ENCODE measurements at regions of chr22 and their contacts with region 1.

Region 1: GRCh38 chr22:41468381-41469217 is at the starts of genes ACO2 and PHF5A:
- DNase-seq: peak; percentile 77 to 96 (median 85)
- ATAC-seq: peak; percentile 96
- H3K4me3 ChIP-seq: peak within 1 kb of the TSS; percentile 89
- H3K27ac ChIP-seq: peak within 1 kb of the TSS; percentile 97
- H3K4me1 ChIP-seq: peaks cover 0 to 9% of the 10 kb centered on the region in 2 experiments; a peak in 2 of 5 replicates
- H3K27me3 ChIP-seq: no peaks in the 10 kb centered on the region
- CTCF ChIP-seq: no peak
- EP300 ChIP-seq: peak; percentile 3; the same call in 1 of the 2 replicates
- POLR2A ChIP-seq: peak; percentile 83
- RAD21 ChIP-seq: no peak
- polyA plus RNA-seq, gene ACO2: 16.2 to 28.7 TPM
- polyA plus RNA-seq, gene PHF5A: 14.2 to 30.9 TPM

Region 2: GRCh38 chr22:41285820-41286638 is 182.6 kb before region 1 on chr22 and contains the start of gene RANGAP1:
- CTCF ChIA-PET with region 1: no interaction called
- POLR2A ChIA-PET with region 1: no interaction called
- in situ Hi-C with region 1: no loop called
- intact Hi-C with region 1: loop called (anchors 10 kb)
- DNase-seq: peak; percentile 88 to 97 (median 92)
- ATAC-seq: peak; percentile 99
- H3K4me3 ChIP-seq: peak within 1 kb of the TSS; percentile 96
- H3K27ac ChIP-seq: peak within 1 kb of the TSS; percentile 97
- H3K4me1 ChIP-seq: peaks cover 12 to 20% of the 10 kb centered on the region in 2 experiments
- H3K27me3 ChIP-seq: no peaks in the 10 kb centered on the region
- CTCF ChIP-seq: peak in 2 of 3 experiments; percentile 2 to 28; a peak in 2 of 6 replicates
- EP300 ChIP-seq: no peak
- POLR2A ChIP-seq: peak; percentile 84
- RAD21 ChIP-seq: no peak
- polyA plus RNA-seq, gene RANGAP1: 2.1 to 3.8 TPM

Region 3: GRCh38 chr22:41429232-41429950 is 39.2 kb before region 1 on chr22:
- CTCF ChIA-PET with region 1: no interaction called
- POLR2A ChIA-PET with region 1: no interaction called
- in situ Hi-C with region 1: no loop called
- intact Hi-C with region 1: no loop called
- DNase-seq: no peak
- ATAC-seq: no peak
- H3K4me3 ChIP-seq: no peak overlapping the region
- H3K27ac ChIP-seq: no peak overlapping the region
- H3K4me1 ChIP-seq: peaks cover 0 to 3% of the 10 kb centered on the region in 2 experiments; a peak in 1 of 5 replicates
- H3K27me3 ChIP-seq: no peaks in the 10 kb centered on the region
- CTCF ChIP-seq: no peak
- EP300 ChIP-seq: no peak
- POLR2A ChIP-seq: no peak
- RAD21 ChIP-seq: no peak

Region 4: GRCh38 chr22:41448189-41448808 is 20.3 kb before region 1 on chr22:
- CTCF ChIA-PET with region 1: no interaction called
- POLR2A ChIA-PET with region 1: interaction called, 36 read pairs
- in situ Hi-C with region 1: no loop called
- intact Hi-C with region 1: loop called (anchors 2 kb)
- DNase-seq: peak; percentile 62 to 94 (median 76)
- ATAC-seq: peak; percentile 82
- H3K4me3 ChIP-seq: peak overlapping the region; percentile 92
- H3K27ac ChIP-seq: peak overlapping the region; percentile 94
- H3K4me1 ChIP-seq: peaks cover 6 to 26% of the 10 kb centered on the region in 2 experiments; a peak in 4 of 5 replicates
- H3K27me3 ChIP-seq: no peaks in the 10 kb centered on the region
- CTCF ChIP-seq: no peak
- EP300 ChIP-seq: no peak
- POLR2A ChIP-seq: peak; percentile 63
- RAD21 ChIP-seq: no peak

Region 5: GRCh38 chr22:41458161-41458728 is 10.4 kb before region 1 on chr22:
- CTCF ChIA-PET with region 1: no interaction called
- POLR2A ChIA-PET with region 1: interaction called, 13 read pairs
- in situ Hi-C with region 1: no loop called
- intact Hi-C with region 1: no loop called
- DNase-seq: no peak
- ATAC-seq: no peak
- H3K4me3 ChIP-seq: no peak overlapping the region
- H3K27ac ChIP-seq: no peak overlapping the region
- H3K4me1 ChIP-seq: no peaks in the 10 kb centered on the region
- H3K27me3 ChIP-seq: no peaks in the 10 kb centered on the region
- CTCF ChIP-seq: no peak
- EP300 ChIP-seq: no peak
- POLR2A ChIP-seq: no peak
- RAD21 ChIP-seq: no peak

Region 6: GRCh38 chr22:41479671-41480396 is 11.2 kb after region 1 on chr22:
- CTCF ChIA-PET with region 1: no interaction called
- POLR2A ChIA-PET with region 1: interaction called, 18 read pairs
- in situ Hi-C with region 1: no loop called
- intact Hi-C with region 1: no loop called
- DNase-seq: no peak
- ATAC-seq: no peak
- H3K4me3 ChIP-seq: no peak overlapping the region
- H3K27ac ChIP-seq: no peak overlapping the region
- H3K4me1 ChIP-seq: peaks cover 6% of the 10 kb centered on the region in 2 experiments; a peak in 3 of 5 replicates
- H3K27me3 ChIP-seq: no peaks in the 10 kb centered on the region
- CTCF ChIP-seq: no peak
- EP300 ChIP-seq: no peak
- POLR2A ChIP-seq: no peak
- RAD21 ChIP-seq: no peak

Region 7: GRCh38 chr22:41517172-41518047 is 48.8 kb after region 1 on chr22:
- CTCF ChIA-PET with region 1: no interaction called
- POLR2A ChIA-PET with region 1: no interaction called
- in situ Hi-C with region 1: no loop called
- intact Hi-C with region 1: loop called (anchors 5 kb)
- DNase-seq: peak in 3 of 4 experiments; percentile 43 to 46 (median 43)
- ATAC-seq: no peak
- H3K4me3 ChIP-seq: no peak overlapping the region
- H3K27ac ChIP-seq: no peak overlapping the region
- H3K4me1 ChIP-seq: peaks cover 12 to 19% of the 10 kb centered on the region in 2 experiments
- H3K27me3 ChIP-seq: no peaks in the 10 kb centered on the region
- CTCF ChIP-seq: peak; percentile 72 to 80 (median 74)
- EP300 ChIP-seq: no peak
- POLR2A ChIP-seq: no peak; the same call in 1 of the 2 replicates
- RAD21 ChIP-seq: peak; percentile 45 to 68

Region 8: DNA sequence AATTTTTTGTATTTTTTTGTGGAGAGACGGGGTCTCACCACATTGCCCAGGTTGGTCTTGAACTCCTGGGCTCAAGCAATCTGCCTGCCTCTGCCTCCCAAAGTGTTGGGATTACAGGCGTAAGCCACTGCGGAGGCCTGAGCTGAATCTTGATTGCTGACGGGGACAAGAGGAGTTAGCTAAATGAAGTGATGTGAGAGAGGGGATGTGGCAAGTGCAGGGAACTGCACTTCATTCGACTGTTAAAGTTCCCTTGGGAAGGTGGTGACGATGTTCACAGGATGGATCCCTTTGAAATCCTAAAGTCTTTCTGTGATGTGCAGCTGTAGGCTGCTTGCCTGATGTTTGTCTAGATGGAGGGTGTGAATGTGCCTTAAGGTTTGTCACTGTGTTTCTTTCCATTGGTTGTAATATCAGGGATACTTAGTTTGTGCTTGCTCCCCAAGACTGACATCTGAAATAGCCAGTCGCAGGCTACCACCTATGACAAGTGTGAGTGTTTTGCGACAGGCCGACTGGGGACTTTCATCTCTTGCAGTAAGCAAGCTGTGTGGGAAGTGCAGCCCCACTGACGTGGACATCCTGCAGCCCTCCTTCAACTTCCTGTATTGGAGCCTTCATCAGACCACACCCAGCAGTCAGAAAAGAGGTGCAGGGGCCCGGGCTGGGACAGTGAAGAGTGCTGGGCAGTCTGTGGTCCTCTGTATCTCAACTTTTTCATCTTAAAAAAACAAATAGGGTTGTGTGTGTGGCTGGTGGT is 312.3 kb after region 1 on chr22:
- CTCF ChIA-PET with region 1: no interaction called
- POLR2A ChIA-PET with region 1: no interaction called
- in situ Hi-C with region 1: no loop called
- intact Hi-C with region 1: no loop called
- DNase-seq: peak; percentile 25 to 59 (median 32)
- ATAC-seq: peak; percentile 84
- H3K4me3 ChIP-seq: no peak overlapping the region
- H3K27ac ChIP-seq: no peak overlapping the region
- H3K4me1 ChIP-seq: peaks cover 0 to 6% of the 10 kb centered on the region in 2 experiments; a peak in 2 of 5 replicates
- H3K27me3 ChIP-seq: no peaks in the 10 kb centered on the region
- CTCF ChIP-seq: no peak
- EP300 ChIP-seq: no peak
- POLR2A ChIP-seq: no peak
- RAD21 ChIP-seq: no peak